Activated CD4-positive, alpha-beta T cell treated with anti-CD3 and anti-CD28 coated beads, Interleukin-2, amount 10 ng/mL, durations not matched to agents 24 days and 14 days (primary cell): ENCODE measurements at regions of chr16 and their contacts with region 1.

Region 1: DNA sequence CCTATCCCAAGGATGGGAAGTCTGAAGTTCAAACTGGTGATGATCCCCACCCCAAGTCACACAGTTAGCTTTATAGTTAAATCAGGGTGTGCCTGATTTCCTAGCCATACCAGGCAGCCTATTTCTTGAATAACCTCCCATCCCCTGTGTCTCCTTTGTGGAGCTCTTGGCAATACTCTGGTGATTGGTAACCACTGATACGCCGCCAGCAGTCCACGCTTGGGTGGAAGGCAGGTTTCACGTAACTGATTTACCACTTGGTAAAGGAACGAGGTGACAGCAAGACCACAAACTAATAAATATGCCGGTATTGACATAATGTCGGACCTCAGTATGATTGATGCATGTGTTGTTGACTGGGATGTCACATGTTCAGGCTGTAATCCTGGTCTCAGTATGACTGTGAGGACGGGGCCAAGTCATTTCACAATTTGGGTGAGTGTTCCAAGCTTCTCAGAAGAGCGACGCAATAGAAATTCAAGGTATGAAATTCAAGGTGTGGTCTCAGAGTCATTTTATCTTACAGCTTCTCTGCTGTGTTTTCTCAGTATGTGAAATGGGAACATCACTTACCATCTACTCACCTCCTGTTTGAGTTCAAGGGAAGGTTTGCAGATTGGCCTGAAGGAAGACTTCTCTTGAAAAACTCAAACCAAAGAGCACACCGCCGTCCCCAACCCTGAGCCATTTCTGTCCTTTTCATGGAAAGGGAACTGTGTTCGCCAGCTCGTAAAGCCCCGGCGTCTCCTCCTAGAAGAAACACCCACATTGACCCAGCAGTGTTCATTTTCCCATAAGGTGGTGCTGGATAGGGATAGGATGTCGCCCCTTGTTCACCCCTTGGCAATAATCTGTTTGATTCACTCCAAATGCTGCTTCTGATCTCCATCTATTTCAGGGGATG is 678.9 kb downstream of the WWOX start:
- DNase-seq: peak; percentile 87
- H3K4me3 Mint-ChIP-seq: peak overlapping the region; percentile 63
- H3K27ac Mint-ChIP-seq: peak overlapping the region; percentile 94
- H3K4me1 Mint-ChIP-seq: peaks cover 53% of the 10 kb centered on the region
- H3K27me3 Mint-ChIP-seq: no peaks in the 10 kb centered on the region

Region 2: GRCh38 chr16:78455861-78456260 is 322.5 kb before region 1 on chr16:
- intact Hi-C with region 1: no loop called
- DNase-seq: no peak
- H3K4me3 Mint-ChIP-seq: no peak overlapping the region
- H3K27ac Mint-ChIP-seq: no peak overlapping the region
- H3K4me1 Mint-ChIP-seq: no peaks in the 10 kb centered on the region
- H3K27me3 Mint-ChIP-seq: no peaks in the 10 kb centered on the region

Region 3: GRCh38 chr16:78705694-78706093 is 72.7 kb before region 1 on chr16:
- intact Hi-C with region 1: loop called (anchors 1 kb)
- DNase-seq: peak; percentile 65
- H3K4me3 Mint-ChIP-seq: no peak overlapping the region
- H3K27ac Mint-ChIP-seq: no peak overlapping the region
- H3K4me1 Mint-ChIP-seq: peaks cover 5% of the 10 kb centered on the region
- H3K27me3 Mint-ChIP-seq: peaks cover 4% of the 10 kb centered on the region

Region 4: DNA sequence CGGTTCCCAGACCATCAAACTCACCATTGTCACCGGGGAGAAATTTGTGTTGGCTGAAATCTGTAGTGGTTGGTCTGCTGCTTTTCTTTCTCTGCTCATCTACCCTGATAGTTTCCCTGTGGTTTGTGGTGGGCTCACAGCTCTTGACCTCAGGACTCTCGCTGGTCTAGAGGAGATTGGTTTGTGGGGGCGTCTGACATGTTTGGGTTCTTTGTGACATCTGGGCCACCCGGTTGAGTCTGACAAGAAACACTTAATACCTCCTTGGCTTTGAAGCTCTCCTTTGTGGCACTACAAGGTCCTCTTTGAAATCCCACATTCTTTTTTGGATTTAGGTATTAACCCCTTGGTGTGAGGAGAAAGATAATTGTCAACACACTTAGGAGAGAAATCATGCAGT is 16.9 kb before region 1 on chr16:
- intact Hi-C with region 1: loop called (anchors 2 kb)
- DNase-seq: no peak
- H3K4me3 Mint-ChIP-seq: no peak overlapping the region
- H3K27ac Mint-ChIP-seq: no peak overlapping the region
- H3K4me1 Mint-ChIP-seq: no peaks in the 10 kb centered on the region
- H3K27me3 Mint-ChIP-seq: peaks cover 4% of the 10 kb centered on the region

Region 5: DNA sequence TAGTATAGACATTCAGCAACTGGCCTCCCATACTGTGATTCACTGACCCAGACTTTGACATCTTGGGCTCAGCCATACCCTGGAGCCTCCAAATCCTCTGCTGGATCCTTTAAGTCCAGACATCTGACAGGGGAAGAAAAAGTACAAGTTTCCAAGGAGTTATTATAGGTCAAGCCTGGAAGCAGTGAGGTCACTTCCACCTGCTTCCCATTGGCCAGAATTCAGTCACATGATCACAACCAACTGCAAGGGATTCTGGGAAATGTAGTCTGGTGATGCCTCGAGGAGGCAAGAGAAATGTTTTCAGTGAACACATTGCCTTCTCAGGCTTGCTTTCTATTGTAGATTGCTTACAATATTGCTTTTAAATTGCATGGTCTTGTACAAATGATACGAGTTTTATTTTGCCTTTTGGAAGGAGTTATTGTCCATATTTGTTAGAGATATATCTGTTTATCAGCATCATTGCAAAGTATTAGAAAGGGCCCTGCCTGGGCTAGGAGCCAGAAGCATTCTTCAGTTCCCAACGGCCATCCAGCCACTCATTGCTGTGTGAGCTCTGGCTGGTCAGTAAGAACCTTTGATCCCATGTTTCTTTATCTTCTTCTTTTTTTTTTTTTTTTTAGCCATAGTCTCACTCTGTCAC is 18.0 kb after region 1 on chr16:
- intact Hi-C with region 1: no loop called
- DNase-seq: peak; percentile 76
- H3K4me3 Mint-ChIP-seq: no peak overlapping the region
- H3K27ac Mint-ChIP-seq: no peak overlapping the region
- H3K4me1 Mint-ChIP-seq: peaks cover 21% of the 10 kb centered on the region
- H3K27me3 Mint-ChIP-seq: peaks cover 2% of the 10 kb centered on the region

Region 6: GRCh38 chr16:78844682-78845081 is 66.3 kb after region 1 on chr16:
- intact Hi-C with region 1: no loop called
- DNase-seq: no peak
- H3K4me3 Mint-ChIP-seq: no peak overlapping the region
- H3K27ac Mint-ChIP-seq: no peak overlapping the region
- H3K4me1 Mint-ChIP-seq: no peaks in the 10 kb centered on the region
- H3K27me3 Mint-ChIP-seq: no peaks in the 10 kb centered on the region

Region 7: GRCh38 chr16:78896280-78896679 is 117.9 kb after region 1 on chr16:
- intact Hi-C with region 1: loop called (anchors 1 kb)
- DNase-seq: no peak
- H3K4me3 Mint-ChIP-seq: no peak overlapping the region
- H3K27ac Mint-ChIP-seq: peak overlapping the region; percentile 56
- H3K4me1 Mint-ChIP-seq: peaks cover 33% of the 10 kb centered on the region
- H3K27me3 Mint-ChIP-seq: peaks cover 2% of the 10 kb centered on the region

Region 8: GRCh38 chr16:79089735-79090284 is 311.5 kb after region 1 on chr16:
- intact Hi-C with region 1: loop called (anchors 5 kb)
- DNase-seq: peak; percentile 91
- H3K4me3 Mint-ChIP-seq: peak overlapping the region; percentile 75
- H3K27ac Mint-ChIP-seq: peak overlapping the region; percentile 94
- H3K4me1 Mint-ChIP-seq: peaks cover 49% of the 10 kb centered on the region
- H3K27me3 Mint-ChIP-seq: peaks cover 5% of the 10 kb centered on the region

Region 9: DNA sequence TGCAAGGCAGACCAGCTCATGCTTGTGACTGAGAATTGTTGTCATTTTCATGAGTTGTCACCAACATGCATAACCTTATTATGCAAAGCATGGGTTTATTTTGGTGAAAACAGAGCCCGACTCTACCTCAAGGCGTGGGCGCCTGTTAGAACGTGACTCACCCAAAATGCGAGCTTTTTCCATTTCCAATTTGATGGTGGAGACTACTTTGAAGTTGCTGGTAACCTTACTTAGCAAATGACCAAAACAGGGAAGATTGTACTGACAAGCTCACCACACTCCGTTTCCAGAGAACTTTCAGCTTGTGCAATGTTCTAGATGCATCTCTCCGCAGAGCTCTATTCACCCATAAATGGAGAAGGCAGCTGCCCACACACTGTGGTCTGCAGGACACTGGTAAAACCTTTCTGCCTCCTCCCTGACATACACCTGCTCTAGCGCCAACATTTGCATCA is 537.7 kb after region 1 on chr16:
- intact Hi-C with region 1: loop called (anchors 1 kb)
- DNase-seq: peak; percentile 84
- H3K4me3 Mint-ChIP-seq: peak overlapping the region; percentile 68
- H3K27ac Mint-ChIP-seq: peak overlapping the region; percentile 87
- H3K4me1 Mint-ChIP-seq: peaks cover 31% of the 10 kb centered on the region
- H3K27me3 Mint-ChIP-seq: peaks cover 25% of the 10 kb centered on the region